IMR-90 (cell line): ENCODE measurements at regions of chr11 and their contacts with region 1.

Region 1: DNA sequence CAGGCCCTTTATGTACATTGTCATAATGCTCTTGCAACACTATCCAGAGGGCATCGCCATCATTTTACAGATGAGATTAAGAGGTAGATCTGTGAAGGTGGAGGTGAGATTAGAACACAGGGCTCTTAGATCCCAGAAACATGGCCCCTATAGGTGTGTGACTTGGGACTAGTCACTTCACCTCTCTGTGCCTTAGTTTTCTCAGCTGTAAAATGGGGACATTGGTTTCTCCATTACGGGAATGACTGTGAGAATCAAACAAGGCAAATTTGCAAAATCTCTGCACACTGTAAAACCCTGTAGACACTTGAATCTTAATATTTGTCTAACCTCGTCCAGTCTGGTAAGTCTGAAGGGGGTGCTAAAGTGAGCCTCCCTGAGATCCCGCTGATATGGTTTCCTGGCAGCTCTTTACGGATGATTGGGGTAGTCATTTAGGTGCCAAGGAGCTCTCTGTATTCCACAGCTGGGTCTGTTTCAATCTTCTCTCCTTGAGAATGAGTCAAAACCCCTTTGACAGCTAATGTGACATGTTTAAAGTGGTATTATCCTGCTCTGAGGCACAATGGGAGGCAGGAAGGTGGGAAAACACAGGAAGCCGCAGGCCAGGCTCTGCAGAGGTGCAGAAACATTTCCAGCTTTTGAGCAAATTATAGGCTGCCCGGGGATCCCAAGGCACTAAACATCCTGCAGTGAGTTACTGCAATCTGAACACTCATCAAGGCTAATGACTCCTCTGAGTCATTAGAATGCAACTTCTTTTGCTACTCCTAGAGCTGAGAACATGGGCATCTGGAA is 140.8 kb downstream of the CCDC81 start:
- DNase-seq: peak; percentile 91
- ATAC-seq: peak; percentile 77
- H3K4me3 ChIP-seq: no peak overlapping the region
- H3K27ac ChIP-seq: no peak overlapping the region; the same call in 1 of the 2 replicates
- H3K4me1 ChIP-seq: peaks cover 24% of the 10 kb centered on the region
- H3K27me3 ChIP-seq: no peaks in the 10 kb centered on the region
- CTCF ChIP-seq: no peak
- POLR2A ChIP-seq: no peak
- RAD21 ChIP-seq: peak; percentile 5; the same call in 1 of the 2 replicates

Region 2: GRCh38 chr11:86395061-86395551 is 120.4 kb before region 1 on chr11:
- CTCF ChIA-PET with region 1: no interaction called
- POLR2A ChIA-PET with region 1: interaction called, 12 read pairs
- dilution Hi-C with region 1: no loop called
- in situ Hi-C with region 1: no loop called
- intact Hi-C with region 1: no loop called
- DNase-seq: peak; percentile 34
- ATAC-seq: peak; percentile 60
- H3K4me3 ChIP-seq: no peak overlapping the region
- H3K27ac ChIP-seq: peak overlapping the region; percentile 65
- H3K4me1 ChIP-seq: peaks cover 14% of the 10 kb centered on the region
- H3K27me3 ChIP-seq: no peaks in the 10 kb centered on the region
- CTCF ChIP-seq: no peak
- POLR2A ChIP-seq: no peak
- RAD21 ChIP-seq: no peak

Region 3: DNA sequence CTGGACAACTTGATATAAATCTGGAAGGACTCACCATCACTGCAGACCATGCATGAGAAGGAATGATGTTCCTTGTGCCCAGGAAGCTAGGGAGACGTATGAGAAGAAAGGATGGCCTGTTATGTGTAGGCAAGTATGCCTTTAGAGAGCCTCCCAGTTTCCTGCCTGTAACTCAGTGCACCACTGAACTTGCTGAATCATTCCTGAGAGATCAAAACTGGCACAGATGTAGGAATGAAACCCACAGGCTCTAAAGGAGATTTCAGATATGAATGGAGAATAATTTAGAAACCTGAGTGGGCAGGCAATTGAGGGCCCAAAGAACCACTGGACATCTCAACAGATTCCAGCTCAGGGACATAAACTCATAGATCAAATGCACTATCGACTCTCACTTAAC is 246.5 kb after region 1 on chr11:
- CTCF ChIA-PET with region 1: no interaction called
- POLR2A ChIA-PET with region 1: no interaction called
- dilution Hi-C with region 1: no loop called
- in situ Hi-C with region 1: no loop called
- intact Hi-C with region 1: no loop called
- DNase-seq: peak; percentile 72
- ATAC-seq: peak; percentile 82
- H3K4me3 ChIP-seq: no peak overlapping the region
- H3K27ac ChIP-seq: peak overlapping the region; percentile 42; the same call in 1 of the 2 replicates
- H3K4me1 ChIP-seq: peaks cover 10% of the 10 kb centered on the region; the same call in 1 of the 2 replicates
- H3K27me3 ChIP-seq: no peaks in the 10 kb centered on the region
- CTCF ChIP-seq: no peak
- POLR2A ChIP-seq: no peak
- RAD21 ChIP-seq: no peak